Activated CD4-positive, alpha-beta T cell treated with anti-CD3 and anti-CD28 coated beads for 36 hours (primary cell): ENCODE measurements at regions of chr2 and their contacts with region 1.

Region 1: GRCh38 chr2:9630749-9631483 is at the start of gene YWHAQ:
- DNase-seq: peak; percentile 97
- ATAC-seq: peak; percentile 89
- H3K4me3 Mint-ChIP-seq: peak within 1 kb of the TSS; percentile 99
- H3K27ac Mint-ChIP-seq: peak within 1 kb of the TSS; percentile 95
- H3K4me1 Mint-ChIP-seq: peaks cover 45% of the 10 kb centered on the region
- H3K27me3 Mint-ChIP-seq: no peaks in the 10 kb centered on the region
- total RNA-seq, gene YWHAQ: 370 to 508 TPM

Region 2: DNA sequence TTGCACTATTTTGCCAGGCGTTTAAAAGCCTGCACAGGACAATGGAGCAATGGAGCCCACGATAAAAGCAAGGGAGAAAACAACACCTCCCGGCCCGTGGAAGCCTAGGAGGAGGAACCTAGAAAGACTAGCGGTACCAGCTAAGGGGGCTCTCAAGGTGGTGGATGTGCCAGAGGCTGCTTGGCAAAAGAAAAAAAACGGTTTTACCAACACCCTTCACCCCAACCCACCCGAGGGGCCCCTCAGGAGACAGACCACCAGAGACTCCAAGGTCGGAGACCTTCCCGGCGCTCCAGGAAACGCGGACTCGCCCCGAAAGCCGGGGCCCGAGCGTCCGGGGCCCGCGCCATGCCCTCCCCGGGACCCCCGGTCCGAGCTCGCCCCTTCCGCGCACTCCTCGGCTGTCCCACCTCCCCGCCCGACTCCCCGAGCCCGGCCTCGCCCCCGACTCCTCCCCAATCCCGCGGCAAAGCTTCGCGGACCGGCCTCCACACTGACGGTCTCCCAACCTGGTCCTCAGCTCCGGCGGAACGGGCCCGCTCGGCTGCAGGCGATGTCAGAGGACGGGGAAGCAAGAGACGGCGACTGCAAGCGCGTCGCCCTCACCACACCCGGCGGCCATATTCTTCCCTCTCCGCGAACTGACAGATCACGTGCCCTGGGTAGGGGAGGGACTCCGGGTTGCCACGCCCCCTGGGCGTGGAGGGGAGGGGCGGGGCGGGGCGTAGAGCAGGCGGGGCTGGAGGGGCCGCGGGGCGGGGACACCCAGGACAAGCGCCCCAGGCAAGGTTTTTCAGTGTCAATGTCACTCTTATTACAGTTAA is 793.7 kb before region 1 on chr2 and contains the start of gene KIDINS220:
- CTCF ChIA-PET with region 1: no interaction called
- POLR2A ChIA-PET with region 1: no interaction called
- intact Hi-C with region 1: loop called in 1 of 2 experiments (anchors 5 kb)
- DNase-seq: peak; percentile 92
- ATAC-seq: peak; percentile 95
- H3K4me3 Mint-ChIP-seq: peak within 1 kb of the TSS; percentile 99
- H3K27ac Mint-ChIP-seq: peak within 1 kb of the TSS; percentile 98
- H3K4me1 Mint-ChIP-seq: peaks cover 39% of the 10 kb centered on the region
- H3K27me3 Mint-ChIP-seq: no peaks in the 10 kb centered on the region
- total RNA-seq, gene KIDINS220: 22.7 to 24.4 TPM

Region 3: GRCh38 chr2:9392898-9393765 is 237.8 kb before region 1 on chr2:
- CTCF ChIA-PET with region 1: no interaction called
- POLR2A ChIA-PET with region 1: no interaction called
- intact Hi-C with region 1: no loop called
- DNase-seq: no peak
- ATAC-seq: no peak
- H3K4me3 Mint-ChIP-seq: no peak overlapping the region
- H3K27ac Mint-ChIP-seq: no peak overlapping the region
- H3K4me1 Mint-ChIP-seq: no peaks in the 10 kb centered on the region
- H3K27me3 Mint-ChIP-seq: no peaks in the 10 kb centered on the region

Region 4: GRCh38 chr2:9474361-9474967 is 156.5 kb before region 1 on chr2 and contains the start of gene IAH1:
- CTCF ChIA-PET with region 1: no interaction called
- POLR2A ChIA-PET with region 1: no interaction called
- intact Hi-C with region 1: loop called (anchors 1 to 5 kb)
- DNase-seq: peak; percentile 81
- ATAC-seq: peak; percentile 81
- H3K4me3 Mint-ChIP-seq: peak within 1 kb of the TSS; percentile 79
- H3K27ac Mint-ChIP-seq: peak within 1 kb of the TSS; percentile 75
- H3K4me1 Mint-ChIP-seq: peaks cover 42% of the 10 kb centered on the region
- H3K27me3 Mint-ChIP-seq: no peaks in the 10 kb centered on the region
- total RNA-seq, gene IAH1: 53.7 to 63.7 TPM

Region 5: GRCh38 chr2:9618410-9618809 is 12.5 kb before region 1 on chr2:
- CTCF ChIA-PET with region 1: interaction called, 11 read pairs
- POLR2A ChIA-PET with region 1: interaction called, 3 read pairs
- intact Hi-C with region 1: loop called in 1 of 2 experiments (anchors 1 kb)
- DNase-seq: peak; percentile 38
- ATAC-seq: peak; percentile 94
- H3K4me3 Mint-ChIP-seq: peak overlapping the region; percentile 61
- H3K27ac Mint-ChIP-seq: peak overlapping the region; percentile 91
- H3K4me1 Mint-ChIP-seq: peaks cover 94% of the 10 kb centered on the region
- H3K27me3 Mint-ChIP-seq: no peaks in the 10 kb centered on the region

Region 6: GRCh38 chr2:9703085-9703641 is 72.2 kb after region 1 on chr2:
- CTCF ChIA-PET with region 1: interaction called, 3 read pairs
- POLR2A ChIA-PET with region 1: interaction called, 12 read pairs
- intact Hi-C with region 1: no loop called
- DNase-seq: peak; percentile 91
- ATAC-seq: peak; percentile 96
- H3K4me3 Mint-ChIP-seq: no peak overlapping the region
- H3K27ac Mint-ChIP-seq: peak overlapping the region; percentile 37
- H3K4me1 Mint-ChIP-seq: peaks cover 42% of the 10 kb centered on the region
- H3K27me3 Mint-ChIP-seq: no peaks in the 10 kb centered on the region

Region 7: GRCh38 chr2:9782197-9782719 is 151.3 kb after region 1 on chr2:
- CTCF ChIA-PET with region 1: no interaction called
- POLR2A ChIA-PET with region 1: interaction called, 4 read pairs
- intact Hi-C with region 1: loop called (anchors 1 to 2 kb)
- DNase-seq: peak; percentile 89
- ATAC-seq: peak; percentile 80
- H3K4me3 Mint-ChIP-seq: peak overlapping the region; percentile 53
- H3K27ac Mint-ChIP-seq: peak overlapping the region; percentile 93
- H3K4me1 Mint-ChIP-seq: peaks cover 57% of the 10 kb centered on the region
- H3K27me3 Mint-ChIP-seq: no peaks in the 10 kb centered on the region